Adrenal gland (tissue), 19 donors: ENCODE measurements at regions of chr7 and their contacts with region 1.

Region 1: GRCh38 chr7:130719541-130719940 is 14.5 kb downstream of the KLF14 start:
- DNase-seq: no peak
- H3K4me3 ChIP-seq: no peak overlapping the region
- H3K27ac ChIP-seq: no peak overlapping the region
- H3K4me1 ChIP-seq: no peaks in the 10 kb centered on the region
- H3K27me3 ChIP-seq: no peaks in the 10 kb centered on the region
- CTCF ChIP-seq: no peak
- POLR2A ChIP-seq: no peak

Region 2: DNA sequence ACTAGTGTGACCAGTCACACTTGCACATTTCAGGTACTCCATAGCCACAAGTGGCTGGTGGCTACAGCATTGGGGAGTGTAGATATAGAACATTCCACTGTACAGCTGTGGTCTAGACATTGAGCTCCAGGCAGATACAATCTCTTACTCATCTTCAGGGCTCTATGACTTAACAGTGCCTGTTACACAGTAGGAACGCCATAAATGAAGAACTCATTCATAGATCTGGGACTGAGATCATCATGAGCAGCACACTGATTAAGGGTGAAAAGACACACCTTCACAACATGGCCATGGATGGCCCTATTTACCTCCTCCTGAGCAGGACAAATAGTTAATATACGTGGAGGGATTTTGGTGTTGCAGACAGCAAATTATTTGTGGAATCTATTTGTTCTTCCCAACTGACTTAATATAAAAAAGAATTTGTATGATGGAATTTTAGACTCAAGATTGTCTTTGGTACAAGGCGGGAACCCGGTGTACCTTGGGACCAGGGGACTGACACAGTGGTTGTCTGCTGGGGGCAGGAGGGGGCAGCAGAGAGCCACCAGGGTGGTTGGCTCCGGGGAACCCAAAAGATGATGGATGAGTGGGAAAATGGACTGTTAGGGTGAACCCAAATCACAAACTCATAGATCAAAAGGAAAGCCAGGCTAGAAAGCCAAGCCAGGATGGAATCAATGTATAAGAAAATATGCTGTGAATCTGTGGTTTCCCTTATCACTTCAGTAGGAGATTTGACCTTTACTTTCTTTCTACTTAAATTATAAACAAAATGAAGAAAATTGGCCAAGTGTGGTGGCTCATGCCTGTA is 477.1 kb before region 1 on chr7:
- intact Hi-C with region 1: loop called in 1 of 2 experiments (anchors 10 kb)
- DNase-seq: peak; percentile 54 to 74 (median 65)
- H3K4me3 ChIP-seq: no peak overlapping the region
- H3K27ac ChIP-seq: no peak overlapping the region
- H3K4me1 ChIP-seq: no peaks in the 10 kb centered on the region
- H3K27me3 ChIP-seq: no peaks in the 10 kb centered on the region
- CTCF ChIP-seq: peak; percentile 60 to 92 (median 85)
- POLR2A ChIP-seq: no peak